B cell (primary cell): ENCODE measurements at regions of chr6 and their contacts with region 1.

Region 1: GRCh38 chr6:150891888-150892485 is 26.5 kb downstream of the MTHFD1L start:
- DNase-seq: peak; percentile 72
- ATAC-seq: peak; percentile 57
- H3K4me3 ChIP-seq: no peak overlapping the region
- H3K4me3 Mint-ChIP-seq: no peak overlapping the region
- H3K27ac ChIP-seq: no peak overlapping the region
- H3K27ac Mint-ChIP-seq: peak overlapping the region; percentile 8
- H3K4me1 ChIP-seq: peaks cover 14 to 20% of the 10 kb centered on the region in 2 donors
- H3K4me1 Mint-ChIP-seq: peaks cover 20% of the 10 kb centered on the region
- H3K27me3 ChIP-seq: no peaks in the 10 kb centered on the region
- H3K27me3 Mint-ChIP-seq: no peaks in the 10 kb centered on the region
- CTCF ChIP-seq: peak; percentile 91

Region 2: GRCh38 chr6:150830439-150831165 is 61.4 kb before region 1 on chr6:
- CTCF ChIA-PET with region 1: no interaction called
- POLR2A ChIA-PET with region 1: no interaction called
- intact Hi-C with region 1: no loop called
- DNase-seq: no peak
- ATAC-seq: no peak
- H3K4me3 ChIP-seq: no peak overlapping the region
- H3K4me3 Mint-ChIP-seq: no peak overlapping the region
- H3K27ac ChIP-seq: no peak overlapping the region
- H3K27ac Mint-ChIP-seq: peak overlapping the region; percentile 12
- H3K4me1 ChIP-seq: no peaks in the 10 kb centered on the region
- H3K4me1 Mint-ChIP-seq: peaks cover 3% of the 10 kb centered on the region
- H3K27me3 ChIP-seq: no peaks in the 10 kb centered on the region
- H3K27me3 Mint-ChIP-seq: no peaks in the 10 kb centered on the region
- CTCF ChIP-seq: no peak

Region 3: DNA sequence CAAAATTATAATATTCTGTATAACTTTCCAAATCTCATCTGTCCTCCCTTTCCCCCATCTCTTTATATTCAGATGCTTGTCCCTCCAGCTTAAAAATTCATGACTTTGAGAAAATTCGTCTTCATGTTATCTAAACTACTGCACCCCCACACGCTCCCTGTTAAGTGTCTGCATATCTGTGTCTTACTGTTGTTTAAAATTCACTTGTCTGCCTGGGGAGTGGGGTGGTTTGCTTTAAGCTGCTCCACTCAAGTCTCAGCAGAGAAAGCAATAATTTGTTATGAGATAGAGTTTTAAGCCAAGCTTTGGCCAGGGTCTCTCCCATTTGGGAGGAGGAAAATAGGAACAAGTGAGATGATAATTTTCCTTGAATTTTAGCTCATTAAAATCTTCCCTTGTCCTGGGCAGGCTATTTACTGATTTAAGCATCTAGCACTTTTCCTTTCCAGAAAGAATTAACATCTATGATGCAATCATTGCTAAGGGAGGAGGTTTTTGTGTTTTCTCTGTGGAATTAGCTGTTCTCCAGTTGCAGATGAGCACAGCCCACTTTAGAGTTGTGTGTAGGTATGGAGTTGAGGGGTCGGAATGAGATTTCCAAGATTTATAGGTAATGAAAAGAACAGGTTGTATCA is 10.3 kb after region 1 on chr6:
- CTCF ChIA-PET with region 1: interaction called, 39 read pairs
- POLR2A ChIA-PET with region 1: no interaction called
- intact Hi-C with region 1: no loop called
- DNase-seq: no peak
- ATAC-seq: no peak
- H3K4me3 ChIP-seq: no peak overlapping the region
- H3K4me3 Mint-ChIP-seq: no peak overlapping the region
- H3K27ac ChIP-seq: no peak overlapping the region
- H3K27ac Mint-ChIP-seq: no peak overlapping the region
- H3K4me1 ChIP-seq: peaks cover 0 to 6% of the 10 kb centered on the region in 2 donors
- H3K4me1 Mint-ChIP-seq: peaks cover 6% of the 10 kb centered on the region
- H3K27me3 ChIP-seq: no peaks in the 10 kb centered on the region
- H3K27me3 Mint-ChIP-seq: no peaks in the 10 kb centered on the region
- CTCF ChIP-seq: no peak

Region 4: DNA sequence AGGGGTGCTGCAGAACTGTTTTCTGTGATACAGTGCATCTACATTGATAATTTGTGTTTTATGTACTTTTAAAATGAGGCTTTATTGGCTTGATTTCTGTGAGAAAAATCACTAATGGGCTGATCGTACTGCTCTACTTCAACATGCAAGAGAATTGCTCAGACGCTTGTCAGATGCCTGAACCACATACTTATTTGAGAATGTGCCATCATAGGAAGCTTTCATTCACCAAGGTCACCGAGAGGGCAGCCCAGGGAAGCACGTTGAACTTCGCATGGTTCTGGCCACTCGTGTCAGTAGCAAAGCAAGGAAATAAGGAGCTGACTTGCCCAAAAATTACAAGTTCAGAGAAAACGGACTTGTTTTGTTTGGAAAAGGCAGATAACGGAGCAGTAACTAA is 179.3 kb after region 1 on chr6:
- CTCF ChIA-PET with region 1: no interaction called
- POLR2A ChIA-PET with region 1: no interaction called
- intact Hi-C with region 1: no loop called
- DNase-seq: no peak
- ATAC-seq: no peak
- H3K4me3 ChIP-seq: no peak overlapping the region
- H3K4me3 Mint-ChIP-seq: no peak overlapping the region
- H3K27ac ChIP-seq: no peak overlapping the region
- H3K27ac Mint-ChIP-seq: no peak overlapping the region
- H3K4me1 ChIP-seq: peaks cover 0 to 4% of the 10 kb centered on the region in 2 donors
- H3K4me1 Mint-ChIP-seq: peaks cover 10% of the 10 kb centered on the region
- H3K27me3 ChIP-seq: no peaks in the 10 kb centered on the region
- H3K27me3 Mint-ChIP-seq: no peaks in the 10 kb centered on the region
- CTCF ChIP-seq: no peak

Region 5: GRCh38 chr6:151323791-151324487 is 432.0 kb after region 1 on chr6:
- CTCF ChIA-PET with region 1: interaction called, 297 read pairs
- POLR2A ChIA-PET with region 1: interaction called, 3 read pairs
- intact Hi-C with region 1: loop called (anchors 1 kb)
- DNase-seq: peak; percentile 77
- ATAC-seq: peak; percentile 80
- H3K4me3 ChIP-seq: no peak overlapping the region
- H3K4me3 Mint-ChIP-seq: peak overlapping the region; percentile 80
- H3K27ac ChIP-seq: no peak overlapping the region
- H3K27ac Mint-ChIP-seq: peak overlapping the region; percentile 21
- H3K4me1 ChIP-seq: peaks cover 19 to 20% of the 10 kb centered on the region in 2 donors
- H3K4me1 Mint-ChIP-seq: peaks cover 26% of the 10 kb centered on the region
- H3K27me3 ChIP-seq: peaks cover 0 to 18% (median 1%) of the 10 kb centered on the region in 4 experiments
- H3K27me3 Mint-ChIP-seq: peaks cover 62% of the 10 kb centered on the region
- CTCF ChIP-seq: peak; percentile 98

Region 6: GRCh38 chr6:151335930-151336329 is 443.9 kb after region 1 on chr6:
- CTCF ChIA-PET with region 1: interaction called, 297 read pairs
- POLR2A ChIA-PET with region 1: no interaction called
- intact Hi-C with region 1: no loop called
- DNase-seq: no peak
- ATAC-seq: no peak
- H3K4me3 ChIP-seq: no peak overlapping the region
- H3K4me3 Mint-ChIP-seq: no peak overlapping the region
- H3K27ac ChIP-seq: no peak overlapping the region
- H3K27ac Mint-ChIP-seq: no peak overlapping the region
- H3K4me1 ChIP-seq: no peaks in the 10 kb centered on the region
- H3K4me1 Mint-ChIP-seq: peaks cover 3% of the 10 kb centered on the region
- H3K27me3 ChIP-seq: no peaks in the 10 kb centered on the region
- H3K27me3 Mint-ChIP-seq: peaks cover 31% of the 10 kb centered on the region
- CTCF ChIP-seq: no peak

Region 7: GRCh38 chr6:151475653-151476523 is 583.9 kb after region 1 on chr6:
- CTCF ChIA-PET with region 1: interaction called, 5 read pairs
- POLR2A ChIA-PET with region 1: no interaction called
- intact Hi-C with region 1: loop called (anchors 1 kb)
- DNase-seq: peak; percentile 68
- ATAC-seq: peak; percentile 43
- H3K4me3 ChIP-seq: peak overlapping the region in 2 of 5 experiments; percentile 11 to 23
- H3K4me3 Mint-ChIP-seq: peak overlapping the region; percentile 55
- H3K27ac ChIP-seq: no peak overlapping the region
- H3K27ac Mint-ChIP-seq: no peak overlapping the region
- H3K4me1 ChIP-seq: peaks cover 0 to 6% of the 10 kb centered on the region in 2 donors
- H3K4me1 Mint-ChIP-seq: peaks cover 11% of the 10 kb centered on the region
- H3K27me3 ChIP-seq: no peaks in the 10 kb centered on the region
- H3K27me3 Mint-ChIP-seq: no peaks in the 10 kb centered on the region
- CTCF ChIP-seq: peak; percentile 92

Region 8: GRCh38 chr6:151512481-151512880 is 620.5 kb after region 1 on chr6:
- CTCF ChIA-PET with region 1: no interaction called
- POLR2A ChIA-PET with region 1: no interaction called
- intact Hi-C with region 1: no loop called
- DNase-seq: no peak
- ATAC-seq: no peak
- H3K4me3 ChIP-seq: no peak overlapping the region
- H3K4me3 Mint-ChIP-seq: no peak overlapping the region
- H3K27ac ChIP-seq: no peak overlapping the region
- H3K27ac Mint-ChIP-seq: no peak overlapping the region
- H3K4me1 ChIP-seq: no peaks in the 10 kb centered on the region
- H3K4me1 Mint-ChIP-seq: no peaks in the 10 kb centered on the region
- H3K27me3 ChIP-seq: no peaks in the 10 kb centered on the region
- H3K27me3 Mint-ChIP-seq: no peaks in the 10 kb centered on the region
- CTCF ChIP-seq: no peak

Region 9: DNA sequence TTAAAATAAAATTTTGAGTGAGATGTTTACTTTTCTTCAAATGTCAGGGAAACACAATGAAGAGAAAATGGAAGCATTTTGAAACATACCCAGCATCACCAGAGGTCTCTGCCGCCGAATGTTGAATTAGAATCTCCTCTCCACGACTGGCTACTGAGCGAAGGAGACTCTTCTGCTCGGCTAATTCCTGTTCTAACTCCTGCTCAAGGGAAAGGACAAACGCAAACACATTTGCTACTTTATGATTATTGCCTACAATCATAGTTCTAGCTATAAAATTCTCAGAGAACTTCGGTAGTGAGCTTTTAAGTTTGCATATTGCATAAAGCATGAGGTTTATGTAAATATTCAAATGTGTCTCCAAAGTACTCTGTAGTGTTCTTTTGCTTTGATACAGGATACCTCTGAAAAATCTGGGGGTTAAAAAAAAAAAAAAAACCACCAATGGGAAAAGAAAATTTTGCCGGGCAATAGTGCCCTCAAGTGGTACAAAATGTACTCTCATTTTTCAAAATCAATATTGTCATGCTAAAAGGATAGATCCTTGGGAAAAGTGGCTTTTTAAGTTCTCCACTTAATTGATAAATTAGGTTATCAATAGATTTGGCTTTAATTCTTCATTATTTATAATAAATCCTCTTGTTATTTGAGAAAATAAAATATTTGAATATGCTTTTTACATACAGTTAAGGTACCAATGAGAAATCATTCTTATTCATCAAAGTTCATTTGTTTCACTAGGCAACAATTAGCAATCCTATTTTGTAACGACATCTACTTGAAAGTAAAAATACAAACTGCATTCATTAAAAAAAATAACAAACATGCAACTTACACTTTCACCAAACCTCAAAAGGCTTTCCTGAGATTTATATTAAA is 1376.2 kb after region 1 on chr6:
- CTCF ChIA-PET with region 1: no interaction called
- POLR2A ChIA-PET with region 1: no interaction called
- intact Hi-C with region 1: loop called (anchors 5 kb)
- DNase-seq: peak; percentile 32
- ATAC-seq: no peak
- H3K4me3 ChIP-seq: no peak overlapping the region
- H3K4me3 Mint-ChIP-seq: no peak overlapping the region
- H3K27ac ChIP-seq: no peak overlapping the region
- H3K27ac Mint-ChIP-seq: no peak overlapping the region
- H3K4me1 ChIP-seq: no peaks in the 10 kb centered on the region
- H3K4me1 Mint-ChIP-seq: no peaks in the 10 kb centered on the region
- H3K27me3 ChIP-seq: no peaks in the 10 kb centered on the region
- H3K27me3 Mint-ChIP-seq: no peaks in the 10 kb centered on the region
- CTCF ChIP-seq: peak; percentile 66